Activated T-helper 2 cell treated with anti-CD3 and anti-CD28 coated beads, Interferon-gamma antibody, Interleukin-2, Interleukin-4, amounts not matched to agents 10 μg/mL and 5 μg/mL and 100 μg/mL, durations not matched to agents 14 hours and 24 hours and 36 hours (primary cell): ENCODE measurements at regions of chr11 and their contacts with region 1.

Region 1: DNA sequence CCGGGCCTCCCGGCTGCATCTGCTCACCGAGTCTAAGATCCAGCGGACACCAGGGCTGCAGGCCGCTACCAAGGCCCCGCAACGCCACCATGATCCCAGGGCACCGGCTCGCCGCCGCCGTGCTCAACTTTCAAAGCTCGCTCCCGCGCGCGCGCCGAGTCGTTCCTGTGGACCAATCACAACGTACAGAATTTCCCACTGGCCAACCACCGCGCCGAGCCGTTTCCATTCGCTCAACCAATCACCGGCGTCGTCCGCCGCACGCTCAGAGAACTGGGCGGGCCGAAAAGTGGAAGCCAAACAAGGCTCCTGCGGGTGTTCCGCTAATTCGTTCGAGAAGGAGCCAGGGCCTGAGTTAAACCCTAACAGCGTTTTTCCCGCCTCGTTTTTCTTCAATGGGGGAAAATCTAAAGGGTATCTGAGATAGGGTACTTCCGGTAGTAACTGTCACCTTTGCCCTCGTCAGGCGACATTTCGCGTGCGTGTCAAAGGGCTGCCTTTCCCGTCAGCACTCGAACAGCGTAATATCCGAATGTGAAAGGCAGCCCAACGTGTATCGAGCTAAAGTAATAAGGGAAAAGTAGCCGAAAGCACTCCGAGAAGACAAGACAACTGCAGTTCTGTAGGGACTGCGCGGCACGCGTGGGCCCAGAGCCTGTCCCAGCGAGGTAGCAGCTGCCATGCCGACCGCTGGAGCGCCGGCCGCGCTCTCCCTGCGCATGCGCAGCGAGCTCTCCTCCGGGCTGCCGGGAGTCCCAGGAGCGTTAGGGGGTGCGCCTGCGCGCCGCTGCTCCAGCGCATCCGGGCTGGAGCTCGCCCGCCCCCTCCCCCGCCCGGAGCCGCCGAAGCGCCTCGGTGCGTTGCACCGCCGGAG is at the starts of genes NCAPD3 and VPS26B:
- DNase-seq: peak; percentile 96
- H3K4me3 Mint-ChIP-seq: peak within 1 kb of the TSS; percentile 97
- H3K27ac Mint-ChIP-seq: peak within 1 kb of the TSS; percentile 98
- H3K4me1 Mint-ChIP-seq: peaks cover 59% of the 10 kb centered on the region
- H3K27me3 Mint-ChIP-seq: no peaks in the 10 kb centered on the region
- total RNA-seq, gene NCAPD3: 98.2 and 99.9 TPM in 2 replicates
- total RNA-seq, gene VPS26B: 41.7 and 43.8 TPM in 2 replicates

Region 2: DNA sequence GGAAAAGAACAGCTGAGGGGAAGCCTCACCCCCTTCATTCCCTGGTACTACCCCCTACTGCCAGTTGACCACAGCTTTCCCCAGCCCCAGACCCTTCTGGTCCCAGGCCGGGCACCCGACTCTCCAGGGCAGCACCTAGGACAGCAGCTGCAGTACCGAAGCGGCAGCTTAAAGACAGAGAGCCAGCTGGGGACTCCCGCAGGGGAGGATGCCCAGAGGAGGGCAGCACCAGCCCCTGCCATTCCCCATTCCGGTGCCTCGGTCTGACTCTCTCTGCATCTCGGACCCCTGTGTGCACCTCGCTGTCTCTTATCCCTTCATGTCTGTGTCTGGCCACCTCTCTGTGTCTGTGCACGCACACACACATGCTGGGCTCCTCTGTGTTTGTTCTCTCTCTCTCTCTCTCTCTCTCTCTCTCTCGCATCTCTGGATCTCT is 276.7 kb before region 1 on chr11:
- intact Hi-C with region 1: loop called (anchors 5 kb)
- DNase-seq: peak; percentile 67
- H3K4me3 Mint-ChIP-seq: peak overlapping the region; percentile 69
- H3K27ac Mint-ChIP-seq: peak overlapping the region; percentile 76
- H3K4me1 Mint-ChIP-seq: peaks cover 67% of the 10 kb centered on the region
- H3K27me3 Mint-ChIP-seq: no peaks in the 10 kb centered on the region

Region 3: GRCh38 chr11:133957900-133958299 is 266.2 kb before region 1 on chr11:
- intact Hi-C with region 1: no loop called
- DNase-seq: no peak
- H3K4me3 Mint-ChIP-seq: peak overlapping the region; percentile 83
- H3K27ac Mint-ChIP-seq: peak overlapping the region; percentile 86
- H3K4me1 Mint-ChIP-seq: peaks cover 41% of the 10 kb centered on the region
- H3K27me3 Mint-ChIP-seq: peaks cover 10% of the 10 kb centered on the region

Region 4: GRCh38 chr11:134033696-134034491 is 190.2 kb before region 1 on chr11:
- intact Hi-C with region 1: loop called (anchors 10 kb)
- DNase-seq: peak; percentile 67
- H3K4me3 Mint-ChIP-seq: no peak overlapping the region
- H3K27ac Mint-ChIP-seq: no peak overlapping the region
- H3K4me1 Mint-ChIP-seq: peaks cover 40% of the 10 kb centered on the region
- H3K27me3 Mint-ChIP-seq: peaks cover 18% of the 10 kb centered on the region

Region 5: DNA sequence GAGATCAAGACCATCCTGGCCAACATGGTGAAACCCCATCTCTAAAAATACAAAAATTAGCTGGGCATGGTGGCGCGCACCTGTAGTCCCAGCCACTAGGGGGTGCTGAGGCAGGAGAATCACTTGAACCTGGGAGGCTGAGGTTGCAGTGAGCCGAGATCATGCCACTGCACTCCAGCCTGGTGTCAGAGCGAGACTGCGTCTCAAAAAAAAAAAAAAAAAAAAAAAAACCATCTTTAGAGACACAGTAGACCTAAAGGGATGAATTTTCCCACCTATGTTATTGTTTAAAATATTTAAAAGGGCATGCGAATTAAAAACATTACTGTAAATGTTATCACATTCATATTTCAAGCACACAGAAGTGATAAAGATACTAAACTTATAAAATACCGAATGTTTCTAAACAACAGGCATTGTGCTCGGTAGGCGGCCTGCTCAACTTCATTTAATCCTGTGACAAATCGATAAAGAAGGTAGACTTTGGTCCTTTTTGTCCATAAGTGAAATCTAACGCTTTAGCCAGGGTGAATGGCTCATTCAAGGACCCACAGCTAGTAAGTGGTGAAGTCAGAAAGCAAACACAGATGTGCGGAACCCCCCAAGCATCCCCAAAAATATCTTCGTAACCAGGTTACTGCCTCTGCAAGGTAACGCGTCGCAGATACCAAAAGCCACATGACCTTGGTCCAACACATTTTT is 16.4 kb before region 1 on chr11:
- intact Hi-C with region 1: loop called (anchors 2 kb)
- DNase-seq: peak; percentile 55
- H3K4me3 Mint-ChIP-seq: no peak overlapping the region
- H3K27ac Mint-ChIP-seq: peak overlapping the region; percentile 28
- H3K4me1 Mint-ChIP-seq: peaks cover 15% of the 10 kb centered on the region
- H3K27me3 Mint-ChIP-seq: no peaks in the 10 kb centered on the region

Region 6: DNA sequence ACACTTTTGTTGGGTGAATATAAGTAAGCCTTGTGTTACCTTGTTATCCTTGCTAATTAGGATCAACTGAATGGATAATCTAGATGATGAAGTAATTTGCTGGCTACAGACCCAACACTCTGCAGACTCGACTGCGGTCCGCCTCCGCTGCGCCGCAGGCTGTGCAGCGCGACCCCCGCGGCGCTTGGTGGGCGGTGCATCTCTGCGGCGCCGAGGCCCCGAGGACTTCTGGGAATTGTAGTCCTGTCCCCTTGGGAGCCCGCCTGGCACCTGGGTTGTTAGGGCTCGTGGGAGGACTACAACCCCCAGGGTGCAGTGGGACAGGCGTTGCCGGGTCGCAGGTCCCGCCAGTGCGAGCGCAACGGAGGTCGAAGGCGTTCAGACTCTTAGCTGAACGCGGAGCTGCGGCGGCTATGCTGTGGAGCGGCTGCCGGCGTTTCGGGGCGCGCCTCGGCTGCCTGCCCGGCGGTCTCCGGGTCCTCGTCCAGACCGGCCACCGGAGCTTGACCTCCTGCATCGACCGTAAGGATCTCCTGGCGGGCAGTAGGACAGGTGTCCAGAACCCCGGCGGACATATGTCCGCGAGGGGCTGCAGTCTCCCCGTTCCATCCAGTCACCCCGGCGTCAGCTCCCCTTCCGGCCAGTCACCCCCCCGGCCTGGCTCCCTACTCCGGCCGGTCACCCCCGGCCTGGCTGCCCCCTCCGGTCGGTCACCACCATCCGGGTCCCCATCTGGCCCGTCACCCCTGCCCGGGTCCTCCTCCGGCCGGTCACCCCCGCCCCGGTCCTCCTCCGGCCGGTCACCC is 29.3 kb after region 1 on chr11 and contains the starts of genes ACAD8 and THYN1:
- intact Hi-C with region 1: loop called (anchors 1 kb)
- DNase-seq: peak; percentile 93
- H3K4me3 Mint-ChIP-seq: peak within 1 kb of the TSS; percentile 99
- H3K27ac Mint-ChIP-seq: peak within 1 kb of the TSS; percentile 85
- H3K4me1 Mint-ChIP-seq: peaks cover 31% of the 10 kb centered on the region
- H3K27me3 Mint-ChIP-seq: no peaks in the 10 kb centered on the region
- total RNA-seq, gene ACAD8: 27.3 and 27.7 TPM in 2 replicates
- total RNA-seq, gene THYN1: 55.6 and 60.8 TPM in 2 replicates

Region 7: GRCh38 chr11:134275534-134276395 is 51.7 kb after region 1 on chr11 and contains the start of gene GLB1L3:
- intact Hi-C with region 1: loop called (anchors 1 kb)
- DNase-seq: peak; percentile 82
- H3K4me3 Mint-ChIP-seq: peak within 1 kb of the TSS; percentile 87
- H3K27ac Mint-ChIP-seq: peak within 1 kb of the TSS; percentile 96
- H3K4me1 Mint-ChIP-seq: peaks cover 56% of the 10 kb centered on the region
- H3K27me3 Mint-ChIP-seq: peaks cover 2% of the 10 kb centered on the region
- total RNA-seq, gene GLB1L3: 14.5 and 15.4 TPM in 2 replicates